ENCODE measurements at regions of chr3 and their contacts with region 1.

Region 1: GRCh38 chr3:58299839-58300516 is 6.1 kb upstream of the RPP14 start:
- DNase-seq: peak; percentile 38
- H3K4me3 Mint-ChIP-seq: no peak overlapping the region
- H3K27ac Mint-ChIP-seq: no peak overlapping the region
- H3K4me1 Mint-ChIP-seq: no peaks in the 10 kb centered on the region
- H3K27me3 Mint-ChIP-seq: peaks cover 11% of the 10 kb centered on the region
- CTCF ChIP-seq: peak; percentile 54

Region 2: GRCh38 chr3:58167431-58168351 is 132.3 kb before region 1 on chr3:
- CTCF ChIA-PET with region 1: interaction called, 11 read pairs
- POLR2A ChIA-PET with region 1: no interaction called
- intact Hi-C with region 1: no loop called
- DNase-seq: peak; percentile 54
- H3K4me3 Mint-ChIP-seq: no peak overlapping the region
- H3K27ac Mint-ChIP-seq: no peak overlapping the region
- H3K4me1 Mint-ChIP-seq: peaks cover 4% of the 10 kb centered on the region
- H3K27me3 Mint-ChIP-seq: no peaks in the 10 kb centered on the region
- CTCF ChIP-seq: peak; percentile 67

Region 3: DNA sequence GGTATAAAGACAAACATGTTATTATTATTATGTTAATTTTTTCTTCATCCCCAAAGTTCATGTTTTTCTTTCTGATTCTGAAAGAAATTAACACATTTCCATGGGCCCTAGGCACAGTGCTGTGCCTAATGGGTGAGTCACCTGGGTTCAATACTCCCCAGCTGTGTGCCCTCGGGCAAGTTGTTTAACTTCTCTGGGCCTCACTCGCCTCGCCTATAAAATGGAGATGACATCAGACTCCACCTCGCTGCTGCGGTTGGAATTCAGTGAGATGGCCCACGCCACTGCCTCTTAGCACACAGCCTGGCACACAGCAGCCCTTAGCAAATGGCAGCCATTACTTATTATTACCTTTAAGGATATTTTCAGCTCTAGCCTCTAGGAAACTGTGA is 111.8 kb before region 1 on chr3:
- CTCF ChIA-PET with region 1: interaction called, 254 read pairs
- POLR2A ChIA-PET with region 1: interaction called, 71 read pairs
- intact Hi-C with region 1: loop called (anchors 1 kb)
- DNase-seq: peak; percentile 86
- H3K4me3 Mint-ChIP-seq: no peak overlapping the region
- H3K27ac Mint-ChIP-seq: no peak overlapping the region
- H3K4me1 Mint-ChIP-seq: peaks cover 9% of the 10 kb centered on the region
- H3K27me3 Mint-ChIP-seq: no peaks in the 10 kb centered on the region
- CTCF ChIP-seq: no peak

Region 4: DNA sequence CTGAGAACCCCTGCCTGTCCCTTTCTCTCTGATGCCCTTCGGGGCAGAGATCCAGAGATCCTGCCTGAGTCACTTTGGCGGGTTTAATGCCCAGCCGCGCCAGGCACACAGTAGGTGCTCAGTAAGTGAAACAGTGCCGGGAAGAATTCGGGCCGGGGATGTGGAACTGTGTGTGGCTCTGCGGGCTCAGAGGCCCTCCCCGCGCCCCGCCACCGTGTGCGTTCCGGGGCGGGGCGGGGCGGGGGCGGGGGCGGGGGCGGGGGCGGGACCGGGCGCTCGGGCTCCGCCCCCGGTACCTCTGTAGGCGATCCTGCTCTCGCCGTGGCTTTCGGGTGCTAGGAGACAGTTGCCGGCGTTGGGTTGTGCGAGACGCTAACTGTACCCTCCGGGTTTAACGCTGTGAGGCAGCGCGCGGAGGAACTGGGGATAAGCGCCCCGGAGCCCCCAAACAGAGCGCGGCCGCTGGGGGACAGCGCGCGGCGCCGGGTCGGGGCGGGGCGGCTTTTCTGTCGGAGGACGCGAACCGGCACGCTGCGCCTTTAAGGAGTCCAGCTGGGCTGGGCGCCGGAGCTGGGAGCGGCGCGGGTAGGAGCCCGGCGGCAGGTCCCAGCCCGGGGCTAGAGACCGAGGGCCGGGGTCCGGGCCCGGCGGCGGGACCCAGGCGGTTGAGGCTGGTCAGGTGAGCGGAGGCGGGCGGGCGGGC is 62.6 kb before region 1 on chr3 and contains the start of gene ABHD6:
- CTCF ChIA-PET with region 1: interaction called, 12 read pairs
- POLR2A ChIA-PET with region 1: interaction called, 9 read pairs
- intact Hi-C with region 1: loop called (anchors 1 kb)
- DNase-seq: peak; percentile 69
- H3K4me3 Mint-ChIP-seq: peak within 1 kb of the TSS; percentile 87
- H3K27ac Mint-ChIP-seq: peak within 1 kb of the TSS; percentile 75
- H3K4me1 Mint-ChIP-seq: peaks cover 23% of the 10 kb centered on the region
- H3K27me3 Mint-ChIP-seq: peaks cover 6% of the 10 kb centered on the region
- CTCF ChIP-seq: peak; percentile 18
- total RNA-seq, gene ABHD6: 3.4 and 3.9 TPM in 2 replicates

Region 5: DNA sequence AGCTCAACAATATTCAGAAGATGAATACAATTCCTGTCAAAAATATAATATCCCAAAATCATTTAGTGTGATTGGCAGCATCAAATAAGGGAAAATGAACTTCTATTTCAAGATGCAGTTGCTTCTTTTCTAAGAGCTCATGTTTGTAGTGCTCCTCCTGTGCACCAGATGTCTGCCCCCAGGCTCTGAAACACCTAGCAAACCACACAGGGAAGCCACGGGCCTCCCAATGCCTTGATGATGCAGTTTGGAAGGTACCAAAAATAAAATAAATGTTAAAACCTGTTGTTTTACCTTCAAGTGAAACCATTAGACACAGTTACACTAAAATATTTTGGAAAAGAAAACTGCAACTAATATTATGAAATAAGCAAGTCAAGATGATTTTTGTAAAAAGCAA is 727.6 kb after region 1 on chr3:
- CTCF ChIA-PET with region 1: no interaction called
- POLR2A ChIA-PET with region 1: no interaction called
- intact Hi-C with region 1: no loop called
- DNase-seq: no peak
- H3K4me3 Mint-ChIP-seq: no peak overlapping the region
- H3K27ac Mint-ChIP-seq: no peak overlapping the region
- H3K4me1 Mint-ChIP-seq: no peaks in the 10 kb centered on the region
- H3K27me3 Mint-ChIP-seq: no peaks in the 10 kb centered on the region
- CTCF ChIP-seq: no peak

Measured in MCF 10A (cell line).